ENCODE measurements at regions of chr6 and their contacts with region 1.

Region 1: GRCh38 chr6:17156112-17156921 is 54.5 kb downstream of the STMND1 start:
- DNase-seq: peak in 2 of 3 donors; percentile 33 to 65
- ATAC-seq: peak; percentile 60 to 70 (median 64)
- H3K4me3 ChIP-seq: no peak overlapping the region
- H3K27ac ChIP-seq: no peak overlapping the region
- H3K4me1 ChIP-seq: peaks cover 0 to 10% (median 3%) of the 10 kb centered on the region in 4 donors
- H3K27me3 ChIP-seq: no peaks in the 10 kb centered on the region
- CTCF ChIP-seq: peak; percentile 80 to 88 (median 84)
- POLR2A ChIP-seq: no peak

Region 2: GRCh38 chr6:17584241-17584803 is 428.0 kb after region 1 on chr6:
- intact Hi-C with region 1: loop called (anchors 5 kb)
- DNase-seq: no peak
- ATAC-seq: peak; percentile 82 to 91 (median 88)
- H3K4me3 ChIP-seq: peak overlapping the region in 1 of 3 donors; percentile 32
- H3K27ac ChIP-seq: peak overlapping the region in 2 of 3 donors; percentile 24 to 46
- H3K4me1 ChIP-seq: peaks cover 0 to 13% (median 0%) of the 10 kb centered on the region in 4 donors
- H3K27me3 ChIP-seq: no peaks in the 10 kb centered on the region
- CTCF ChIP-seq: peak; percentile 81 to 93 (median 86)
- POLR2A ChIP-seq: no peak

Region 3: DNA sequence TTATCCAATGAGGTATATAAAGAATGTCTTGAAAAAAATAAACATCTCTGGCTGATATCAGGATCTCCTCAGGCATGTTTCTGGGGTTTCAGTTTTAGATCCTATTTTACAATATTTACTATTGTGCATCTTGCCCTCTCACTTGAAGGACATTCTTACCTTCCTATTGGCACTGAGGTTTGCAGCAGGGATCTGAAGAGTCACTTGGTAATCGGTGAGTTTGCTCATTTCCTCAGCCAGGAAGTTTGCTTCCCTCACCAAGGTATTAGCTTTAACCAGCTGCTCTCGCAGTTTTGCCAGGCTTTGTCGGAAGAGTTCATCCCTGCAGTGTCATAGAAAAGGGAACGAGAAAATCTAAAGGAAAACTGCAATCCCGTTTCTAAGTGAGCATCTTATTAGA is 652.3 kb after region 1 on chr6:
- intact Hi-C with region 1: loop called in 1 of 2 experiments (anchors 10 kb)
- DNase-seq: no peak
- ATAC-seq: no peak
- H3K4me3 ChIP-seq: no peak overlapping the region
- H3K27ac ChIP-seq: no peak overlapping the region
- H3K4me1 ChIP-seq: no peaks in the 10 kb centered on the region
- H3K27me3 ChIP-seq: no peaks in the 10 kb centered on the region
- CTCF ChIP-seq: no peak
- POLR2A ChIP-seq: no peak

Measured in right lobe of liver (tissue), 6 donors.